Mammary epithelial cell (primary cell): ENCODE measurements at regions of chr11 and their contacts with region 1.

Region 1: DNA sequence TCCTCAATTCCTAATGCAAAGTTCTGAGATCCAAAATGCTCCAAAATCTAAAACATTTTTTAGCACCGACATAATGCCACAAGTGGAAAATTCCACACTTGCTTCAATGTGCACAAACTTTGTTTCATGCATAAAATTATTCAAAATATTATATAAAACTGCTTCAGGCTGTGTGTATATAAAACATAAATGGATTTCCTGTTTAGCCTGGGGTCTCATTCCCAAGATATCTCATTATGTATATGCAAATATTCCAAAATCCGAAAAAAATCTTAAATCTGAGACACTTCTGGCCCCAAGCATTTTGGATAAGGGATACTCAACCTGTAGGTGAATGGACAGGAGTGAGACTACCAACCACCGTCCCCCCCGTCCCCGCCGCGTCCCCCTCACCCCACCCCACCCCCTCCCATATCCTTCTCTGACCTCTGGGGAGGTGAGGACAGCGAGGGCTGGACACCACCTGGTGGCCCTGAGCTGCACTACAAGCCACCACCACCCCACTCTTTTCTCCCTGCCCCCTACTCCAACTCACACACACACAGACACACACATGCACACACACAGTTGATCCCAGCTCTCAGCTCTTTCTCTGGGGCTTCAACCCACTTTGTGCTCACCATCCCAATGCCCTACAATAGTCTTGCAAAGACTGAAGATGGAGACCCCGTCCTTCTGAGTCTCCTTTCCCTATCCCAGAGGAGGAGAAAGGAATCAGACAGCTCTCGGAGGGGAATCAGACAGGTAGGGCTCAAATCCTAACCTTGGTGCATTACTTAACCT is 101.0 kb downstream of the PDE2A start:
- DNase-seq: no peak
- H3K4me3 ChIP-seq: no peak overlapping the region
- H3K27ac ChIP-seq: no peak overlapping the region
- H3K4me1 ChIP-seq: peaks cover 29% of the 10 kb centered on the region
- H3K27me3 ChIP-seq: no peaks in the 10 kb centered on the region
- CTCF ChIP-seq: peak; percentile 60 to 79

Region 2: GRCh38 chr11:72471005-72471898 is 102.0 kb before region 1 on chr11:
- CTCF ChIA-PET with region 1: interaction called, 10 read pairs
- dilution Hi-C with region 1: no loop called
- in situ Hi-C with region 1: loop called in 1 of 2 experiments (anchors 5 kb)
- intact Hi-C with region 1: loop called (anchors 1 kb)
- DNase-seq: peak; percentile 56
- H3K4me3 ChIP-seq: no peak overlapping the region
- H3K27ac ChIP-seq: no peak overlapping the region
- H3K4me1 ChIP-seq: no peaks in the 10 kb centered on the region
- H3K27me3 ChIP-seq: no peaks in the 10 kb centered on the region
- CTCF ChIP-seq: peak; percentile 82 to 85

Region 3: GRCh38 chr11:72519220-72519881 is 53.9 kb before region 1 on chr11:
- CTCF ChIA-PET with region 1: no interaction called
- dilution Hi-C with region 1: no loop called
- in situ Hi-C with region 1: no loop called
- intact Hi-C with region 1: no loop called
- DNase-seq: no peak
- H3K4me3 ChIP-seq: peak overlapping the region; percentile 16 to 37 (median 33)
- H3K27ac ChIP-seq: no peak overlapping the region
- H3K4me1 ChIP-seq: no peaks in the 10 kb centered on the region
- H3K27me3 ChIP-seq: no peaks in the 10 kb centered on the region
- CTCF ChIP-seq: no peak